ENCODE measurements at regions of chr4 and their contacts with region 1.

Region 1: DNA sequence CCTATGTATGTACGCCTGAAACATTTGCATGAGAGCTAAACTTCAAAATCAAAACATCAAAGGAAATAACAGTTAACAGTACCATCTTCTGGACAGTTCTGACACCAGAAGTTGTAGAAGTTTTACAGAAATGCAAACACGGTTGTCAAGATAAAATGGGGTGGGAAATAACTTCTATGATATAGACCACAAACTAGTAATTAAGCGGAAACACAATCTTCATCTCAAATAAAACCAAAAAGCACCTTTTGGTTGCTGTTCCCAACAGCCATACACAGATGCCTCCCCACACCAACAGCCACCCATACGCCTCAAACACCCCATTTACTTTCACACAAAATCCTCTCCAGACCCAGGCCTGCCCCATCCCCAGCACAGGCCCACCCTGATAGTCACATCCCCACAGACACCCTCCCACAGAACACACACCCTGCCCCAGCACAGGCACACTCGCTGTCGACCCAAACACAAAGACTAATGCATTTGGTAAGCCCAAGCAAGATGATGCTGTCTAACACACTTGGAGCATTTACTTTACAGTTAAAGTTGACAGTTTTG is 64.3 kb downstream of the TAPT1 start:
- DNase-seq: no peak
- H3K4me3 ChIP-seq: no peak overlapping the region
- H3K27ac ChIP-seq: no peak overlapping the region
- H3K4me1 ChIP-seq: no peaks in the 10 kb centered on the region
- H3K27me3 ChIP-seq: no peaks in the 10 kb centered on the region
- CTCF ChIP-seq: no peak
- POLR2A ChIP-seq: no peak

Region 2: GRCh38 chr4:16056681-16057385 is 105.1 kb before region 1 on chr4:
- intact Hi-C with region 1: loop called (anchors 10 kb)
- DNase-seq: no peak
- H3K4me3 ChIP-seq: no peak overlapping the region
- H3K27ac ChIP-seq: no peak overlapping the region
- H3K4me1 ChIP-seq: no peaks in the 10 kb centered on the region
- H3K27me3 ChIP-seq: no peaks in the 10 kb centered on the region
- CTCF ChIP-seq: no peak
- POLR2A ChIP-seq: no peak

Measured in vagina (tissue), 2 donors.